ENCODE measurements at regions of chr2 and their contacts with region 1.

Region 1: DNA sequence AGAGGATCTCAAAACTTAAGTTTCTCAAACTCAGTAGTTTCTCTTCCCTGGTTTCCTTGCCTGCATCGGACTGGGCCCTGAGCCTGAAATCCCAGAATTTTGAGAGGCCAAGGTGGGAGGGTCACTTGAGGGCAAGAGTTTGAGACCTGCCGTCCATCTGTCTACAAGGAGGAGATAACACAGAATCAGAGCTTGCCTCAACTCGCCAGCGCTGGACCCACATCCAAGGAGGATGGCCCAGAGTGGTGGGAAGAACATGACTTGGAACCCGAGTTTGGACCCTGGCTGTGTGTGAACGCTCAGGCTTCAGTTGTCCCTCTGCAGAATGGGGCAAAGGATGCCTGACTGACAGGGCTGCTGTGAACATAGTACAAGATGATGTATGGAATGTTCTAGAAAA is 80.1 kb downstream of the MCFD2 start:
- DNase-seq: no peak
- ATAC-seq: no peak
- H3K4me3 ChIP-seq: no peak overlapping the region
- H3K27ac ChIP-seq: no peak overlapping the region
- H3K4me1 ChIP-seq: peaks cover 8% of the 10 kb centered on the region
- H3K27me3 ChIP-seq: no peaks in the 10 kb centered on the region

Region 2: DNA sequence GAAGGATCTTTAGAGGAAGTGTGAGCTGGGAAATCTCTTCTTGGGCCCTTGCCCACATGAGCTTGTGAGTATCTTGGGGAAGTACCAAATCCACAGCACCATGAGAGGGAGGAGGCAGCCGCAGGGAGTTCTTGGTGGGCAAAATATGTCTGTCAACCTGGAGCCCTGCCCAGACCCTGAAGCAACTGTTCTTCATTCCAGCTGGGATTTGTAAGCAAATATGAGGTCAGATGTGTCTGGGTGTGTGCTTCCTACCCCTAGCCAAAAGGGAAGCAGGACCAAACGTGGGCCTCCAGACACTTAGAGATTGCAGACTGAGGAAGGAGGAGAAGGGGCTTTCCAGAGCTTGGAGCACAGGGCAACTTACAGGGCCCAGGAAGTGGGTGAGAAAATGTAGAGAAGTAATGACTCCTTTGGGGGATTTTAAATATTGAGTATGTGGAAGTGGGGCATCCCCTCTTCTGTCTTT is 314.3 kb before region 1 on chr2:
- intact Hi-C with region 1: no loop called
- DNase-seq: peak; percentile 87 to 88 (median 87)
- ATAC-seq: peak; percentile 85 to 92
- H3K4me3 ChIP-seq: no peak overlapping the region
- H3K27ac ChIP-seq: peak overlapping the region; percentile 12
- H3K4me1 ChIP-seq: no peaks in the 10 kb centered on the region
- H3K27me3 ChIP-seq: no peaks in the 10 kb centered on the region

Region 3: GRCh38 chr2:46866770-46867246 is 31.3 kb after region 1 on chr2:
- intact Hi-C with region 1: loop called in 1 of 4 experiments (anchors 2 kb)
- DNase-seq: peak; percentile 66 to 82 (median 72)
- ATAC-seq: peak; percentile 81 to 89
- H3K4me3 ChIP-seq: no peak overlapping the region
- H3K27ac ChIP-seq: peak overlapping the region; percentile 85
- H3K4me1 ChIP-seq: peaks cover 11% of the 10 kb centered on the region
- H3K27me3 ChIP-seq: no peaks in the 10 kb centered on the region